ENCODE measurements at regions of chr13 and their contacts with region 1.

Region 1: DNA sequence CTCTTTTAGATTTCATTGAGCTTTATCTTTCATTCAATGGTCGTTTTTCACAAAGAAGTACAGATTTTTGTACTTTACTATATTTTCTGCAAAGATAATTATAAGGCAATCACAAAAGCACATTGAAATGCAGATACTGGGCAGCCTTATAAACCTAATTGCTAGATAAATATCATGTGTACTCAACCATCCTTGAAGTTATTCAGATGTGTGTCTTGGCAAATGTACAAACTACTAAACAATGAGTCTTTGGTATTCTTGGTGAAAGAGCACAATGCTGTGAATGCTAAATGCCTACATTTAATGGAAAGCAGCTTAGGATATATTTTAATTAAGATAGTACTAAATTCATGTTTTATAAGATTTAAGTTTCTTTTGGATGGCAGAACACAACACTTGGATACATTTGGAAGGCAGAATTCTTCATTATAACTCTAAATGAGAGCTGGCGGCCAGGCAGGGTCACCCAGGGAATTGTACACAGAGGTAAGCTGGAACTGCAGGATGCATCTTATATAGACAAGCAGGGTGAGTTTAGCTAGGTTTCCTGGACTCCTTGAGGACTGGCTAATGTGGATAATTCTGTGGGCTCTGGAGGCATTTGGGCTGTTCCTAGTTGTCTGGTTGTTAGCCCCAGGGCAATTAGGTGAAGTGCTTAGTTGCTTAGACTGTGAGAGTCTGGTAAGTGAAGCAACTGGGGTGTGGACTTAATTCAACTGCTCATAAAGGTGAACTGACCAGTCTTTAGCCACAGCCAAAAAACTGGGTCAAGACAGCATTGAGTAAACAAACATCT is 286.6 kb downstream of the PCDH20 start:
- DNase-seq: no peak
- H3K4me3 ChIP-seq: no peak overlapping the region
- H3K27ac ChIP-seq: no peak overlapping the region
- H3K4me1 ChIP-seq: no peaks in the 10 kb centered on the region
- H3K27me3 ChIP-seq: no peaks in the 10 kb centered on the region
- CTCF ChIP-seq: no peak
- EP300 ChIP-seq: no peak
- POLR2A ChIP-seq: no peak

Region 2: GRCh38 chr13:60990032-60990733 is 138.9 kb before region 1 on chr13:
- intact Hi-C with region 1: no loop called
- DNase-seq: no peak
- H3K4me3 ChIP-seq: no peak overlapping the region
- H3K27ac ChIP-seq: no peak overlapping the region
- H3K4me1 ChIP-seq: no peaks in the 10 kb centered on the region
- H3K27me3 ChIP-seq: no peaks in the 10 kb centered on the region
- CTCF ChIP-seq: no peak
- EP300 ChIP-seq: no peak
- POLR2A ChIP-seq: no peak

Region 3: DNA sequence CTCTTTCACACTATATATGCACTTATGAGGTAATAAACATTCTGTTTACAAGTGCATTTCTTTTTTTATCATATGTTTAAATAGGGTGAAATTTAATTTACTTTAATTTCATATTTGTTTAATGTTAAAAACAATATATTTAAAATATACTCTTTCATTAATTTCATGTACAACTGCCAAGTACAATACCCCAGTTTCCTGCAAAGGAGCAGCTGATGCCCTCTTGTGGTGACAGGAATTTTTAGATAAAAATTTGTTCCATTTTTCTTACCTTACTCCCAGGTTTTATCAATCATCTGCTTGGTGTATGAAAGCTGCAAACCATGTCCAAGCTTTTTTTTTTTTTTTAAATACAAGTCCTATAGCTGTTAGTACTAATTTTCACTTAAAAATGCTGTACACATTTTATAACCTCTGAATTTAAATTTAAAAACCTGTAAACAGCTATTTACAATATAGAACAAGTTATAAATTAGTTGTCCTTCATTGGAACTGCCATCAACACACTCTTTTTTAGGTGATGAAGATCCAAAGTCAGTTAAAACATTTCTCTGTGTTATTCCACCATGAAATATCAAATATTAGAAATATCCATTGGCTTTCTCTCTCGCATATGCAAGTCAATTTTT is 281.7 kb after region 1 on chr13:
- intact Hi-C with region 1: loop called (anchors 10 kb)
- DNase-seq: no peak
- H3K4me3 ChIP-seq: peak overlapping the region in 1 of 4 donors; percentile 7
- H3K27ac ChIP-seq: no peak overlapping the region
- H3K4me1 ChIP-seq: peaks cover 9 to 28% (median 19%) of the 10 kb centered on the region in 4 donors
- H3K27me3 ChIP-seq: peaks cover 0 to 36% (median 0%) of the 10 kb centered on the region in 4 donors
- CTCF ChIP-seq: peak; percentile 18 to 47 (median 42)
- EP300 ChIP-seq: no peak
- POLR2A ChIP-seq: no peak